ENCODE measurements at regions of chr10 and their contacts with region 1.

Region 1: DNA sequence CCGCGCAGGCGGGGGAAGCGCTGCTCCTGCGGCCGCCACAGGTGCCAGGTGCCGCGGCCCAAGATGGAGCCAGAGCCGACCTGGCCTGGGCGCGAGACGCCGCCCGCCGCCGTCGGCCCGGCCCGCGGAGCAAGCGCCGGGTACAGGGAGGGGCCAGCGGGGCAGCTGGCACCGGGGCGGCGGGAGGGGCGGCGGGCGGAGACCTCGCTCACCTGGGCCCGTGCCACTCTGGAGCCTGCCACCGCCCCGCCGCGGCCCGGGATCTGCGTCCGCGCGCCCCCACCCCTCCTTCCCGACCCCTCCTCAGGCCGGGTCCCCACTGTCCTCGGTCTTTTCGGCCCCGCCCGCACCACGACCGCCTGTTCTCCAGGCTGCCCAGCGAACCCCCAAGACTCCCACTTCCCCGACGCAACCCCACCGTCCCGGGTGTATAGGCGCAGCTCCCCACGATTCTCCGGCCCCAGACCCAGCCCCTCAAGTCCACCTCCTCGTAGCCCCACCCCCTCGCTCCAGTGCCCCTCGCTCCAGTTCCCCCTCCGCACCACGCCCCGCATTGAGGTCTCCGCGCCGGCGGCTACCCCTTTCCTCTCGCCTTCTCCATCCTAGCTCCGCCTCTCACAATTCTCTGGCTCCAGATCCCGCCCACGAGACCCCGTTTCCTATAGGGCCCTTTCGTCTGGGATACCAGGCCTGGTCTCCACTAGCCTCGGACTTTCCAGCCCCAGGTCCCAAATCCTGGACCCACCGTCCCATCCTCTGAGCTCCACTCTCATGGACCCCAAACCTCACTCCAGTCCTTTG is at the start of gene GPRIN2:
- DNase-seq: peak in 2 of 14 experiments; percentile 2 to 33
- ATAC-seq: no peak
- H3K4me3 ChIP-seq: no peak within 1 kb of the TSS
- H3K4me3 Mint-ChIP-seq: peak within 1 kb of the TSS; percentile 8
- H3K27ac ChIP-seq: no peak within 1 kb of the TSS
- H3K27ac Mint-ChIP-seq: no peak within 1 kb of the TSS
- H3K4me1 ChIP-seq: peaks cover 6% of the 10 kb centered on the region
- H3K4me1 Mint-ChIP-seq: peaks cover 11% of the 10 kb centered on the region
- H3K27me3 ChIP-seq: peaks cover 50 to 67% of the 10 kb centered on the region in 2 experiments
- H3K27me3 Mint-ChIP-seq: no peaks in the 10 kb centered on the region
- CTCF ChIP-seq: no peak
- total RNA-seq, gene GPRIN2: not detected

Region 2: DNA sequence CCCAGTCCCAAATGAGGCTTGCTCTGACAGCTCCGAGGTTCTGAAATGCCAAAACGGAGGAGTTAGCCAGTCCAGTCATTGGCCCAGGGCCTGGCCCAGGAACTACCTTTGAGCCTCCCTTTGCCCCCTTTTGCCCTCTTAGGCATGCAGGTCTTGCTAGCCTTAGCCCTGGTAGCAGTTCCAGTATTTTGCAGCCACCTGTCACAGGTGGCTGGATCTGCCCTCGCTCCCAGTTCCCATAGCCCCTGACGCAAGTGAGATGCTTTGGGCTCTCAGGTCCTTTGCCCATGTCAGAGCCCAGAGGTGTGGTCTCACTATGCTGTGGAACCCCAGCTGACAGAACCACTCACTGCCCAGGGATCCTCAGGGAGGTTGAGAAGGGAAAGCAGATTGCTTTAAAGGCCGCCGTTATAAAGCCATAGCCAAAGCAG is 42.3 kb before region 1 on chr10:
- CTCF ChIA-PET with region 1: no interaction called
- POLR2A ChIA-PET with region 1: no interaction called
- intact Hi-C with region 1: no loop called
- DNase-seq: peak in 2 of 14 experiments; percentile 0 to 32
- ATAC-seq: no peak
- H3K4me3 ChIP-seq: no peak overlapping the region
- H3K4me3 Mint-ChIP-seq: no peak overlapping the region
- H3K27ac ChIP-seq: no peak overlapping the region
- H3K27ac Mint-ChIP-seq: no peak overlapping the region
- H3K4me1 ChIP-seq: no peaks in the 10 kb centered on the region
- H3K4me1 Mint-ChIP-seq: no peaks in the 10 kb centered on the region
- H3K27me3 ChIP-seq: no peaks in the 10 kb centered on the region
- H3K27me3 Mint-ChIP-seq: no peaks in the 10 kb centered on the region
- CTCF ChIP-seq: no peak

Region 3: GRCh38 chr10:46530249-46531186 is 26.2 kb before region 1 on chr10:
- CTCF ChIA-PET with region 1: no interaction called
- POLR2A ChIA-PET with region 1: no interaction called
- intact Hi-C with region 1: loop called in 1 of 2 experiments (anchors 2 kb)
- DNase-seq: peak in 2 of 14 experiments; percentile 2 to 29
- ATAC-seq: no peak
- H3K4me3 ChIP-seq: no peak overlapping the region
- H3K4me3 Mint-ChIP-seq: no peak overlapping the region
- H3K27ac ChIP-seq: no peak overlapping the region
- H3K27ac Mint-ChIP-seq: no peak overlapping the region
- H3K4me1 ChIP-seq: no peaks in the 10 kb centered on the region
- H3K4me1 Mint-ChIP-seq: no peaks in the 10 kb centered on the region
- H3K27me3 ChIP-seq: no peaks in the 10 kb centered on the region
- H3K27me3 Mint-ChIP-seq: no peaks in the 10 kb centered on the region
- CTCF ChIP-seq: no peak

Region 4: DNA sequence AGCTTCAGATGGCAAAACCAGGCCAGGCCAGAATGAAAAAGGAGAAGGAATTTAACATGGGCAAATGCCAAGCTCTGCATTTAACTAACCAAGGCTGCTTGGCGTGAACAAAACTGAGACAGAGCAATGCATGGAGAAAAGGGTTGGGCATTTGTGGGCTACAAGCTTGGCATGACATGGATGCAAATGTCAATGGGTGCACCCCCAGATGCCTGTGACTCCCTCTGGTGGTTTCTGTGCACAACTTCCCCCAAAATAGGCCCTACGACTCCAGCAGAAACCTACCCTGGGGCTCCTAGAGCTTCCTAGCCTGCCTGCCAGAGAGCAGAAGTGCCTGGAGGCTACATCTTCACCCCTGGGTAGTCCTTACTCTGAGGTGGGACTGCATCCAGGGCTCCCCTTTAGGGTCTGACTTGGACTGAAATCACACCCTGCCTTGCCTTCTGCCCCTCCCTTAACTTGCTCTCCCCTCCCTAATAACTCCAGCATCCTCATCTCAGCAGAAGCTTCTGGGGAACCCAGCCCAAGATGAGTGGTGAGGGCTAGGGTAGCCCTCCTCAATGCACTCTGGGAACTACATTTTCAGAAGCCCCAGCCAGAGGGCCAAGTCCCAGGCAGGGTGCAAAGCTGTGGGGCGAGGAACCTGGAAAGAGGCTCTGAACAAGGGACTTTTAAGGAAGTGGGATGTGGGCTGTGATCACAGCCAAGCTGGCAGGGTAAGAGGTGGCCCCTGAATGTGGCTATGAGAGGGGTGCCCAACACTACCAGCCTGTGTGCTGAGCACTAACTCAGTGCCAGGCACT is 11.5 kb before region 1 on chr10:
- CTCF ChIA-PET with region 1: no interaction called
- POLR2A ChIA-PET with region 1: no interaction called
- intact Hi-C with region 1: no loop called
- DNase-seq: peak in 3 of 14 experiments; percentile 5 to 31 (median 24)
- ATAC-seq: no peak
- H3K4me3 ChIP-seq: no peak overlapping the region
- H3K4me3 Mint-ChIP-seq: no peak overlapping the region
- H3K27ac ChIP-seq: no peak overlapping the region
- H3K27ac Mint-ChIP-seq: no peak overlapping the region
- H3K4me1 ChIP-seq: no peaks in the 10 kb centered on the region
- H3K4me1 Mint-ChIP-seq: peaks cover 6% of the 10 kb centered on the region
- H3K27me3 ChIP-seq: peaks cover 14 to 28% of the 10 kb centered on the region in 2 experiments
- H3K27me3 Mint-ChIP-seq: peaks cover 37% of the 10 kb centered on the region
- CTCF ChIP-seq: no peak

Region 5: DNA sequence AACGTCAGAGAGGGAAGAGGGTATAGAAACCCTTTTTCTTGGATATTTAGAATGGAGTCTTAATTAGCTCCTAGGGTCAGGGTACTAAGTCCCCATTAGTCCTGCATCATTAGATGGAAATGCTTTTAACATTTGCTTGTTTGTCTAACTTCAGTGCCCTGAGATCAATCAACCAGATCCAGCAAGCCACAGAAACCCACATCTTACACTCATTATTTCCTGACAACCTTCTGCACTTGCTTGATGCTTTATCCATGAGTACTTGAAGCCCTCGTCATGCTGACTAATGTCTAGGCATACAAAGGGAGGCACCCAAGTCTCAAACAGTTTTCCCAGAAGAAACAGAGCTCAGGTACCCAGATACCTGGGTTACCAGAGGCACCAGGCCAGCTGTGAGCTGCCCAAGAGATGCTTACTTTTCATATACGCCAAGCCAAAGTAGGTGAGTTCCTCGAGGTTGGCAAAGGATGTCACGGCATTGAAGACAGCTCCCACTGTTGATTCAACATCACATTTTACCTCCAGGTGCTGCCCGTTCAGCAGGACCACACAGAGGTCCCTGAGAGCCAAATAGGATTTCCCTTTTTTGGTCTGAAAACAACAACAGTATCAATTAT is 1675.1 kb after region 1 on chr10:
- CTCF ChIA-PET with region 1: no interaction called
- POLR2A ChIA-PET with region 1: no interaction called
- intact Hi-C with region 1: loop called in 1 of 2 experiments (anchors 10 kb)
- DNase-seq: no peak
- ATAC-seq: no peak
- H3K4me3 ChIP-seq: no peak overlapping the region
- H3K4me3 Mint-ChIP-seq: no peak overlapping the region
- H3K27ac ChIP-seq: no peak overlapping the region
- H3K27ac Mint-ChIP-seq: no peak overlapping the region
- H3K4me1 ChIP-seq: no peaks in the 10 kb centered on the region
- H3K4me1 Mint-ChIP-seq: no peaks in the 10 kb centered on the region
- H3K27me3 ChIP-seq: no peaks in the 10 kb centered on the region
- H3K27me3 Mint-ChIP-seq: peaks cover 3% of the 10 kb centered on the region
- CTCF ChIP-seq: no peak

Measured in CD4-positive, alpha-beta T cell (primary cell).